Caco-2 (cell line): ENCODE measurements at regions of chr5 and their contacts with region 1.

Region 1: DNA sequence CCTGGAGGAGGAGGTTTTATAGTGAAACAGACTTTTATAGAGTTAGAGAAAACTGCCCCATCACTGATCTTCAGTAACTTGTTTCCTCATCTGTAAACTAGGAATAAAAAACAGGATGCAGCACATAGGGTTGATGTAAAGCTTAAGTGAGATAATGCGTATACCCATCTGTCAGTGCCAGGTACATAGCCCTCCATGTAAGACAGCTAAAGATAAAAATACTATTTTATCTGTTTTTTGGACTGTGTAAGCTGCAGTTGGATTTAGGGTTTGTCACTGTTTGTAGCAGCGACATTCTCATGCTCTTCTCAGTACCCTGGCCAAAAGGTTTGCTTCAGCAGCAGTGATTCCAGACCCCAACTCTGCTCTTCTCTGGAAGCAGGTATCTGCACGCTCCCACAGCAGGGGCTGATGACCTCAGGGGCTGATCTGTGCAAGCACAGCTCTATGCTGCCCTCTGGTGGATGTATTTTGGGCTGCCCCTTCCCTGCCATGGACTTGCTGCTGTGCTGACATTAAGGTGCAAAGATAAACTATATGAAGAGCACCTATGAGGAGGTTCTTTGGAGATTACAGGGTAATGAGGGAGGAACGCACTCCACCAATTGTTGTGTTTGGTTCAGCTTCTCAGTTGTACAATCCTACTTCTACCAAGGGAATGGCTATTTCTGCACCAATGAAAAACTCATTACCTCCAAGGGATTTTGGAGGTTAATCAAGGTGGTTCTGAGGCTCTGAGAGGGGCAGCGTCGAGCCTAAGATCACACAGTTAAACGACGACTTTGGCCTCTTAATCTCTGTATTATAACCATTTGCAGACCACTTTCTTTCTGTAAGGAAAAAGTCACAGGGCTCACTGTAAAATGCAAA is 13.1 kb downstream of the HMHB1 start:
- DNase-seq: peak; percentile 79 to 89
- H3K4me3 ChIP-seq: no peak overlapping the region
- H3K4me3 Mint-ChIP-seq: no peak overlapping the region
- H3K27ac Mint-ChIP-seq: no peak overlapping the region
- H3K4me1 ChIP-seq: peaks cover 8% of the 10 kb centered on the region; the same call in 1 of the 2 replicates
- H3K4me1 Mint-ChIP-seq: no peaks in the 10 kb centered on the region
- H3K27me3 ChIP-seq: no peaks in the 10 kb centered on the region
- H3K27me3 Mint-ChIP-seq: no peaks in the 10 kb centered on the region
- CTCF ChIP-seq: peak; percentile 83 to 91

Region 2: GRCh38 chr5:142922223-142922952 is 902.7 kb before region 1 on chr5:
- CTCF ChIA-PET with region 1: no interaction called
- POLR2A ChIA-PET with region 1: no interaction called
- intact Hi-C with region 1: loop called (anchors 2 kb)
- DNase-seq: peak in 1 of 2 experiments; percentile 19
- H3K4me3 ChIP-seq: no peak overlapping the region
- H3K4me3 Mint-ChIP-seq: no peak overlapping the region
- H3K27ac Mint-ChIP-seq: no peak overlapping the region
- H3K4me1 ChIP-seq: peaks cover 21% of the 10 kb centered on the region
- H3K4me1 Mint-ChIP-seq: peaks cover 27% of the 10 kb centered on the region
- H3K27me3 ChIP-seq: no peaks in the 10 kb centered on the region
- H3K27me3 Mint-ChIP-seq: no peaks in the 10 kb centered on the region
- CTCF ChIP-seq: peak; percentile 42 to 47

Region 3: GRCh38 chr5:143106174-143106573 is 718.9 kb before region 1 on chr5:
- CTCF ChIA-PET with region 1: interaction called, 4 read pairs
- POLR2A ChIA-PET with region 1: no interaction called
- intact Hi-C with region 1: loop called (anchors 1 kb)
- DNase-seq: peak; percentile 55 to 67
- H3K4me3 ChIP-seq: no peak overlapping the region
- H3K4me3 Mint-ChIP-seq: no peak overlapping the region
- H3K27ac Mint-ChIP-seq: no peak overlapping the region
- H3K4me1 ChIP-seq: peaks cover 8% of the 10 kb centered on the region
- H3K4me1 Mint-ChIP-seq: no peaks in the 10 kb centered on the region
- H3K27me3 ChIP-seq: no peaks in the 10 kb centered on the region
- H3K27me3 Mint-ChIP-seq: no peaks in the 10 kb centered on the region
- CTCF ChIP-seq: peak in 1 of 2 experiments; percentile 40

Region 4: DNA sequence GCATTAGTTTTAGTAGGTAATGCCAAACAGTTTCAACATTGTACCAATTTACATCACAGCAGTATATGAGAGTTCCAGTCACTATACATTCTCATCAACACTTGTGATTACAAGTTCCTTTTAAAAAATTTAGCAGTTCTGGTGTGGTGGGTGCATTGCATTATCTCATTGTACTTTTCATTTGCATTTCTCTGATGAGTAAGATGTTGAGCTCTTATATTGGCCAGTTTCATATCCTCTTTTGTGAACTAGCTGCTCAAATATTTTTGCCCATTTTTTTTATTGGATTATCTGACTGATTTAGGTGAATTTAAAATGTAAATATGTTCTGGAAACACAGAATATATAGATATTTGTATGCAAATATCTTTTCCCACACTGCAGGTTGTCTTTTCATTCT is 260.7 kb before region 1 on chr5:
- CTCF ChIA-PET with region 1: interaction called, 4 read pairs
- POLR2A ChIA-PET with region 1: no interaction called
- intact Hi-C with region 1: loop called (anchors 10 kb)
- DNase-seq: no peak
- H3K4me3 ChIP-seq: no peak overlapping the region
- H3K4me3 Mint-ChIP-seq: no peak overlapping the region
- H3K27ac Mint-ChIP-seq: no peak overlapping the region
- H3K4me1 ChIP-seq: peaks cover 46% of the 10 kb centered on the region
- H3K4me1 Mint-ChIP-seq: peaks cover 42% of the 10 kb centered on the region
- H3K27me3 ChIP-seq: no peaks in the 10 kb centered on the region
- H3K27me3 Mint-ChIP-seq: no peaks in the 10 kb centered on the region
- CTCF ChIP-seq: no peak

Region 5: GRCh38 chr5:143707806-143708205 is 117.3 kb before region 1 on chr5:
- CTCF ChIA-PET with region 1: no interaction called
- POLR2A ChIA-PET with region 1: no interaction called
- intact Hi-C with region 1: loop called (anchors 10 kb)
- DNase-seq: no peak
- H3K4me3 ChIP-seq: no peak overlapping the region
- H3K4me3 Mint-ChIP-seq: no peak overlapping the region
- H3K27ac Mint-ChIP-seq: no peak overlapping the region
- H3K4me1 ChIP-seq: 0 out of 2 replicates have a peak, but pooled peaks cover 5% of the 10 kb centered on the region
- H3K4me1 Mint-ChIP-seq: no peaks in the 10 kb centered on the region
- H3K27me3 ChIP-seq: no peaks in the 10 kb centered on the region
- H3K27me3 Mint-ChIP-seq: no peaks in the 10 kb centered on the region
- CTCF ChIP-seq: no peak

Region 6: GRCh38 chr5:144142139-144142823 is 317.2 kb after region 1 on chr5:
- CTCF ChIA-PET with region 1: interaction called, 4 read pairs
- POLR2A ChIA-PET with region 1: no interaction called
- intact Hi-C with region 1: loop called (anchors 10 kb)
- DNase-seq: peak in 1 of 2 experiments; percentile 11
- H3K4me3 ChIP-seq: no peak overlapping the region
- H3K4me3 Mint-ChIP-seq: no peak overlapping the region
- H3K27ac Mint-ChIP-seq: no peak overlapping the region
- H3K4me1 ChIP-seq: no peaks in the 10 kb centered on the region
- H3K4me1 Mint-ChIP-seq: no peaks in the 10 kb centered on the region
- H3K27me3 ChIP-seq: no peaks in the 10 kb centered on the region
- H3K27me3 Mint-ChIP-seq: peaks cover 7% of the 10 kb centered on the region
- CTCF ChIP-seq: peak; percentile 50 to 67